Activated naive CD4-positive, alpha-beta T cell treated with anti-CD3 and anti-CD28 coated beads, Interleukin-2, amount 10 ng/mL, durations not matched to agents 7 days and 5 days (primary cell): ENCODE measurements at regions of chr21 and their contacts with region 1.

Region 1: DNA sequence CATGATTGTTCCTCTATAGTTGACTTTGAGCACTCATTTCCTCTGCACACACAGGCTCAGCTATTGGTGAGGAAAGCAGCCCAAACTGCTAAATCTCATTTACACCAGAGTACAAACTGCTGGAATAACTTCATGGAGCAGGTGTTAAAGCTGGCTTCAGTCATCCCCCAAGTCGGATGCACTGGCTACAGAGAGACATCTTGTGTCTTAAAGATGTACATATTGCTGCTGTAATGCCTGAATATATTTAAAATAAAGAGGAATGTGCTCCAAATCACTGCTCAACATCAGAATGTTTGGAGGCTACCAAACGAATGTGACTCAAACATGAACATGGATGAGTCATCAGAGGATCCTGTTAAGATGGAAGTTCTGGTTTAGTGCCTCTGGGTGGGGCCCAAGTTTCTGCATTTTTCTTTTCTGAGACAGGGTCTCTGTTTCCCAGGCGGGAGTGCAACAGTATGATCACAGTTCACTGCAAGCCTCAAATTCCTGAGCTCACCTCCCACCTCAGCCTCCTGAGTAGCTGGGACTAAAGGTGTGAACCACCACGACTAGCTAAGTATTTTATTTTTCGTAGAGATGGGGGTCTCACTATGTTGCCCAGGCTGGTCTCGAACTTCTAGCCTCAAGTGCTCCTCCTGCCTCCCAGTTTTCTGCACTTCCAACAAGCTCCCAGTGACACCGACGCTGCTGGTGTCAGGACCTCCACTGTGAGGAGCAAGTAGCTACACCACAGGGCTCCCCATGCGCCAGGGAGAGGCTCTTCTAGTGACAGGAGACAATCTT is 79.0 kb upstream of the KRTAP19-8 start:
- DNase-seq: no peak
- H3K4me3 Mint-ChIP-seq: no peak overlapping the region
- H3K27ac Mint-ChIP-seq: peak overlapping the region; percentile 68
- H3K4me1 Mint-ChIP-seq: peaks cover 17% of the 10 kb centered on the region
- H3K27me3 Mint-ChIP-seq: no peaks in the 10 kb centered on the region

Region 2: GRCh38 chr21:31132574-31133242 is 15.4 kb after region 1 on chr21:
- CTCF ChIA-PET with region 1: interaction called, 13 read pairs
- DNase-seq: peak; percentile 81
- H3K4me3 Mint-ChIP-seq: peak overlapping the region; percentile 69
- H3K27ac Mint-ChIP-seq: peak overlapping the region; percentile 96
- H3K4me1 Mint-ChIP-seq: peaks cover 60% of the 10 kb centered on the region
- H3K27me3 Mint-ChIP-seq: no peaks in the 10 kb centered on the region

Region 3: DNA sequence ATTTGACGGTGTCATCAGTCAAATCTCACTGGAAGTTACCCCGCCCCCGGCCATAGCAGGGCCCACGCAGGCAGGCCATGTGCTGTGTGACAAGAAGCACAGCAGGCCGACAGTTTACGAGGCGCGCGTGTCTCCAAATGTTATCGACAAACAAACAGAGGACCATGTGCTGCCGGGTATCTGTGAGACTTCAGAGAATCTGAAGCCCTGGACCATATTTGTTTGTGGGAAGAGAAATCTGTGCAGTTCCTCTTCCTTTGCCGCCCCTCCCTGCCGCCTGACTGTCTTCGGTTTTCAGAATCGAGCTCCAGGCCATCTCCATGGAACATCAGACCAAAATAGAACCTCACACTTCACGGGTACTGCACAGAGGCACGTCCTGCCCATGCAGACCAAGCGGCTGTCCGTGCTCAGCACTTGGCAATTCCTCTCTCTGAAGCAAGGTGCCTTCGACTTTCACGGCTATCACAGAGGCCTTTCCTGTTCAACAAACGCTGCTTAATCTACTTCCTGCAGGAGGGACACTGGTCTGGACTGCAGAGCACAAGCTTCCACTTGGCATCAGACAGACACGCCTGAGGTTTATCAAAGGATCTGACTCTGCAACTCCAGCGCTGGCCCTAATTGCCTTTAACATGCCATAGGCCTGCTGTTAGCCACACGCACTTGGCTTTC is 56.7 kb after region 1 on chr21:
- CTCF ChIA-PET with region 1: interaction called, 23 read pairs
- DNase-seq: peak; percentile 45
- H3K4me3 Mint-ChIP-seq: peak overlapping the region; percentile 29
- H3K27ac Mint-ChIP-seq: peak overlapping the region; percentile 85
- H3K4me1 Mint-ChIP-seq: peaks cover 70% of the 10 kb centered on the region
- H3K27me3 Mint-ChIP-seq: no peaks in the 10 kb centered on the region